GM12878 (cell line): ENCODE measurements at regions of chr7 and their contacts with region 1.

Region 1: DNA sequence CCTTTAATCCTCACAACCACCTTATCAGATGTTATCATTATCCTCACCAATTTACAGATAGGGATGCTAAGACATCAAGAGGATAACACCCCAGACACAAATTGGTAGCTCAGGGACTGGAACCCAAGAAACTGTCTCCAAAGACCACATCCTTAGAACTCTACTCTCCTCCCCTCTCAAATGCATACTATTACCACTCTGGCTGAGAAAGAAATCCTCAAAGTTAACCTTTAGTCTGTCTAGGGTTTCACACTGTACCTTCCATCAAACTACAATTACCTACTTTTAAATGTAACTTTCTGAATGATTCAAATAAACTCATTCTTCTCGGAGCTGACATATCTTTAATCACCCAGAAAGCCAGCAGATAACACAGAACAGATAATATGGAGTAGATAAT is 6.6 kb downstream of the EZH2 start:
- DNase-seq: no peak
- ATAC-seq: peak; percentile 46
- H3K4me3 ChIP-seq: no peak overlapping the region
- H3K27ac ChIP-seq: no peak overlapping the region
- H3K4me1 ChIP-seq: peaks cover 18% of the 10 kb centered on the region
- H3K27me3 ChIP-seq: no peaks in the 10 kb centered on the region
- CTCF ChIP-seq: no peak
- EP300 ChIP-seq: no peak
- POLR2A ChIP-seq: no peak
- RAD21 ChIP-seq: no peak

Region 2: GRCh38 chr7:148704189-148704588 is 173.3 kb before region 1 on chr7:
- CTCF ChIA-PET with region 1: no interaction called
- POLR2A ChIA-PET with region 1: interaction called, 10 read pairs
- RAD21 ChIA-PET with region 1: no interaction called
- SMC1A ChIA-PET with region 1: no interaction called
- in situ Hi-C with region 1: no loop called
- intact Hi-C with region 1: loop called (anchors 10 kb)
- DNase-seq: no peak
- ATAC-seq: no peak
- H3K4me3 ChIP-seq: no peak overlapping the region
- H3K27ac ChIP-seq: no peak overlapping the region
- H3K4me1 ChIP-seq: peaks cover 7% of the 10 kb centered on the region
- H3K27me3 ChIP-seq: no peaks in the 10 kb centered on the region
- CTCF ChIP-seq: no peak
- EP300 ChIP-seq: no peak
- POLR2A ChIP-seq: no peak
- RAD21 ChIP-seq: no peak

Region 3: DNA sequence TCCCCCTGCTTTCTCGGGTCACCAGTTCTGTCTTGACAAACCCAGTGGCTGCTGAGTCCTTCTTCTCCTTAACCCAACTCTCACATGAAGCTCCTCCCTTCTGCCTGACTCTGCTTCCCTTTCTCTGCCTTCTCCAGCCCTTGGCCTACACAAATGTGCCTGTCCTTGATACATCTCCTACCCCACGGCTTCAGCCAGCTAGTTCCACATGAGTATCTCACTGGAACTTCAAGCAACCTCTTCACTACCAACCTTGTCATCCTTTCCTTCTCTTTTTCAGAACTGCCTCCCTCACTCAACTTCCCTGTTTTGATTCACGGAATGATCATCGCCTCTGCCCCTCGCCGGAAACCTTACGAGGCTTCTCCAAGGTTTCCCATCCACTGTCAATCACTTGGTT is 94.9 kb after region 1 on chr7:
- CTCF ChIA-PET with region 1: no interaction called
- POLR2A ChIA-PET with region 1: no interaction called
- RAD21 ChIA-PET with region 1: no interaction called
- SMC1A ChIA-PET with region 1: no interaction called
- in situ Hi-C with region 1: no loop called
- intact Hi-C with region 1: no loop called
- DNase-seq: no peak
- ATAC-seq: no peak
- H3K4me3 ChIP-seq: no peak overlapping the region
- H3K27ac ChIP-seq: no peak overlapping the region
- H3K4me1 ChIP-seq: no peaks in the 10 kb centered on the region
- H3K27me3 ChIP-seq: no peaks in the 10 kb centered on the region
- CTCF ChIP-seq: no peak
- EP300 ChIP-seq: no peak
- POLR2A ChIP-seq: no peak
- RAD21 ChIP-seq: no peak

Region 4: GRCh38 chr7:149013876-149014275 is 136.4 kb after region 1 on chr7:
- CTCF ChIA-PET with region 1: no interaction called
- POLR2A ChIA-PET with region 1: no interaction called
- RAD21 ChIA-PET with region 1: no interaction called
- SMC1A ChIA-PET with region 1: no interaction called
- in situ Hi-C with region 1: no loop called
- intact Hi-C with region 1: no loop called
- DNase-seq: no peak
- ATAC-seq: no peak
- H3K4me3 ChIP-seq: no peak overlapping the region
- H3K27ac ChIP-seq: no peak overlapping the region
- H3K4me1 ChIP-seq: peaks cover 4% of the 10 kb centered on the region; the same call in 1 of the 2 replicates
- H3K27me3 ChIP-seq: no peaks in the 10 kb centered on the region
- CTCF ChIP-seq: no peak
- EP300 ChIP-seq: no peak
- POLR2A ChIP-seq: no peak; the same call in 1 of the 2 replicates
- RAD21 ChIP-seq: no peak